Posterior cingulate gyrus (tissue), 11 donors: ENCODE measurements at regions of chr11 and their contacts with region 1.

Region 1: GRCh38 chr11:134223836-134224709 is at the starts of genes NCAPD3 and VPS26B:
- DNase-seq: peak; percentile 90 to 99 (median 96)

Region 2: GRCh38 chr11:133934599-133935550 is 289.2 kb before region 1 on chr11:
- intact Hi-C with region 1: loop called (anchors 10 kb)
- DNase-seq: peak; percentile 71 to 98 (median 79)

Region 3: GRCh38 chr11:134253188-134253993 is 29.3 kb after region 1 on chr11 and contains the starts of genes ACAD8 and THYN1:
- intact Hi-C with region 1: loop called (anchors 2 kb)
- DNase-seq: peak; percentile 96 to 100 (median 98)